CD4-positive, alpha-beta memory T cell (primary cell): ENCODE measurements at regions of chr14 and their contacts with region 1.

Region 1: GRCh38 chr14:22929104-22929847 is at the start of gene PRMT5:
- DNase-seq: peak; percentile 98 to 100 (median 99)
- H3K4me3 ChIP-seq: peak within 1 kb of the TSS; percentile 83 to 99
- H3K4me3 Mint-ChIP-seq: no peak within 1 kb of the TSS
- H3K27ac ChIP-seq: peak within 1 kb of the TSS; percentile 91
- H3K27ac Mint-ChIP-seq: peak within 1 kb of the TSS in 1 of 7 donors; percentile 75
- H3K4me1 ChIP-seq: peaks cover 17% of the 10 kb centered on the region
- H3K4me1 Mint-ChIP-seq: peaks cover 9 to 14% (median 12%) of the 10 kb centered on the region in 4 donors
- H3K27me3 ChIP-seq: no peaks in the 10 kb centered on the region
- H3K27me3 Mint-ChIP-seq: no peaks in the 10 kb centered on the region
- total RNA-seq, gene PRMT5: 25.8 to 30.5 TPM

Region 2: GRCh38 chr14:22589096-22589839 is 340.0 kb before region 1 on chr14 and contains the start of gene DAD1:
- CTCF ChIA-PET with region 1: interaction called, 4 read pairs
- POLR2A ChIA-PET with region 1: interaction called, 13 read pairs
- intact Hi-C with region 1: loop called (anchors 1 kb)
- DNase-seq: peak; percentile 100
- H3K4me3 ChIP-seq: peak within 1 kb of the TSS; percentile 85 to 87
- H3K4me3 Mint-ChIP-seq: peak within 1 kb of the TSS; percentile 92 to 100 (median 97)
- H3K27ac ChIP-seq: peak within 1 kb of the TSS; percentile 88
- H3K27ac Mint-ChIP-seq: peak within 1 kb of the TSS; percentile 99 to 100 (median 99)
- H3K4me1 ChIP-seq: peaks cover 50% of the 10 kb centered on the region
- H3K4me1 Mint-ChIP-seq: peaks cover 39 to 63% (median 51%) of the 10 kb centered on the region in 4 donors
- H3K27me3 ChIP-seq: no peaks in the 10 kb centered on the region
- H3K27me3 Mint-ChIP-seq: peaks cover 2% of the 10 kb centered on the region in 2 donors
- total RNA-seq, gene DAD1: 110 to 124 TPM

Region 3: GRCh38 chr14:22872033-22872832 is 57.0 kb before region 1 on chr14:
- CTCF ChIA-PET with region 1: interaction called, 24 read pairs
- POLR2A ChIA-PET with region 1: interaction called, 16 read pairs
- intact Hi-C with region 1: loop called (anchors 1 kb)
- DNase-seq: peak; percentile 66 to 78 (median 73)
- H3K4me3 ChIP-seq: peak overlapping the region; percentile 24 to 55
- H3K4me3 Mint-ChIP-seq: peak overlapping the region; percentile 88 to 98 (median 97)
- H3K27ac ChIP-seq: peak overlapping the region; percentile 79
- H3K27ac Mint-ChIP-seq: peak overlapping the region; percentile 72 to 100 (median 89)
- H3K4me1 ChIP-seq: peaks cover 48% of the 10 kb centered on the region
- H3K4me1 Mint-ChIP-seq: peaks cover 17 to 46% (median 33%) of the 10 kb centered on the region in 4 donors
- H3K27me3 ChIP-seq: no peaks in the 10 kb centered on the region
- H3K27me3 Mint-ChIP-seq: no peaks in the 10 kb centered on the region

Region 4: DNA sequence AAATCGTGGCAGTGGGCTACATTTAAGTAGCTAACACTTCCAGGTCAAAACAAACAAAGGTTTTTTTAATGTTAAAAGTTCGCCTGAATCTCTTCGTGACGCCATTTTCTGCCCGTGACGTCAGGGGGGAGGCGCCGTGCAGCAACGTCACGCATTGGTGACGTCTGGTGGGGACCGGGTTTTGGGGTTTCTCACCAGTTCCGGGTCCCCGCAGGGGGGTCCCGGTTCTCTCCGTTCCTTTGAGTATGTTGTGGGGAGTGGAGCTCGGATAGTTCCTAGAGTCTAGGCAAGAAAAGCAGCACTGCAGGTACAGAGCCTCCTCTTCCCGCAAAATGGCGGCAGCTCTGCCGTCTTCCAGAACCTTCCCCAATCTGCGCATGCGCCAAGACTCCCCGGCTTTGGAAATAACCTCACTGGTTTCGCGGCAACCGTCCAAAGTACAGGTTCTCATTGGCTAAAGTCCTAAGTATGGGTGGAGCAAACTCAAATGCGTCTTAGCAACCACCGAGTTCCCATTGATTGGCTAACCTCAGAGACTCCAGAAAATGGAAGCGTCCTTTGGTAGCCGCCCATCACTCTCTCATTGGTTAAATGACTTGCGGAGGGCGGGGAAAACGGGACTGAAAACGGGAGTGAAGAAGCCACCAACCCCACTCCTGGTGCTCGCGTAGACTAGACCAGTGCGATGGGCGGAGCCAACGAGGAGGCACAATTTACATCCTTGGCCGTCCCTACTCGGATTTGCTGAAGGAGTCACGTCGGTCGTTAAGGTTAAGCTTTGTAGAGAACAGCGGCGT is 10.3 kb before region 1 on chr14 and contains the start of gene RBM23:
- CTCF ChIA-PET with region 1: interaction called, 72 read pairs
- POLR2A ChIA-PET with region 1: interaction called, 120 read pairs
- intact Hi-C with region 1: loop called (anchors 1 kb)
- DNase-seq: peak; percentile 99 to 100 (median 100)
- H3K4me3 ChIP-seq: peak within 1 kb of the TSS; percentile 67 to 93
- H3K4me3 Mint-ChIP-seq: peak within 1 kb of the TSS; percentile 94 to 99 (median 96)
- H3K27ac ChIP-seq: peak within 1 kb of the TSS; percentile 98
- H3K27ac Mint-ChIP-seq: peak within 1 kb of the TSS; percentile 99 to 100 (median 100)
- H3K4me1 ChIP-seq: peaks cover 40% of the 10 kb centered on the region
- H3K4me1 Mint-ChIP-seq: peaks cover 13 to 56% (median 33%) of the 10 kb centered on the region in 4 donors
- H3K27me3 ChIP-seq: no peaks in the 10 kb centered on the region
- H3K27me3 Mint-ChIP-seq: peaks cover 0 to 4% of the 10 kb centered on the region in 2 donors
- total RNA-seq, gene RBM23: 119 to 123 TPM

Region 5: DNA sequence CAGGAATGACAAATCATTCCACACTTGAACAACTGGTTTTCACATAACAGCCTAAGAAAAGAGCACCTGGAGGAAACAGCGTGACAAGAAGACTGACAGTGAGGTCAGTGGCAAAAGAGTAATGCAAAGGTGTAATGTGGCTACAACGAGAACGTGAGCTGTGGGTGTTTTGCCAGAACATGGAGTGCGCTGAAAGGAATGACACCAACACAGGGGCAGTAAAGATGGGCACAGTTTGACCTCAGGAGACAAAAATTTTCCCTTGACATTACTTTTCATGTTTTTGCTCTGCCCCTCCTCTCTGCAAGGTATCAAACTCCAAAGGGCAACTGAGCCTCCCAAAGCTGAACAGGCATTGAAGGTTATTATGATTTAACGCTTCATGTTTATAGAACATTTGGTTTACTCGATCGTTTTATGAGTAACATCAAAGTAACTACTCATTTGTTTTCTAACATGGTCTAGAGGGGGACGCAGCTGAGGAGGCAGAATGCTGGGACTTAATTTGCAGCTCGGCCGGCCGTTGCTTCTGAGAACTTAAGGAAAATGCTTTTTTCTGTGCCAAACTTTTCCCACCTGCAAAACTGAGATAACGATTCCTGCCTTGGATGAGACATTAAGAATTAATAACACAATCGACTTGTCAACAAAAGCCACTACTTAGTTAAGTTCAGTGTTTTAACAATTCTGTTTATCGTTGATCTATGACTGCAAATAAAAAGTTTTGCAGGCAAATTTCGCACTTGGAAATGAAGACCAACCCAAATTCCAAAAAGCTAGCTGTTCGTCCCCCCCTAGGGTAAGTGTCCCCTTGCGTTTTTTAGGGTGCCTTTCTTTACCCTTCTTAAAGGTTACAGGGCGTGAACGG is 26.7 kb after region 1 on chr14:
- CTCF ChIA-PET with region 1: interaction called, 28 read pairs
- POLR2A ChIA-PET with region 1: interaction called, 36 read pairs
- intact Hi-C with region 1: loop called (anchors 1 kb)
- DNase-seq: peak in 1 of 5 donors; percentile 11
- H3K4me3 ChIP-seq: peak overlapping the region; percentile 30 to 89
- H3K4me3 Mint-ChIP-seq: peak overlapping the region; percentile 91 to 94 (median 92)
- H3K27ac ChIP-seq: peak overlapping the region; percentile 79
- H3K27ac Mint-ChIP-seq: peak overlapping the region; percentile 92 to 95 (median 93)
- H3K4me1 ChIP-seq: peaks cover 16% of the 10 kb centered on the region
- H3K4me1 Mint-ChIP-seq: peaks cover 13 to 22% (median 16%) of the 10 kb centered on the region in 4 donors
- H3K27me3 ChIP-seq: no peaks in the 10 kb centered on the region
- H3K27me3 Mint-ChIP-seq: no peaks in the 10 kb centered on the region

Region 6: DNA sequence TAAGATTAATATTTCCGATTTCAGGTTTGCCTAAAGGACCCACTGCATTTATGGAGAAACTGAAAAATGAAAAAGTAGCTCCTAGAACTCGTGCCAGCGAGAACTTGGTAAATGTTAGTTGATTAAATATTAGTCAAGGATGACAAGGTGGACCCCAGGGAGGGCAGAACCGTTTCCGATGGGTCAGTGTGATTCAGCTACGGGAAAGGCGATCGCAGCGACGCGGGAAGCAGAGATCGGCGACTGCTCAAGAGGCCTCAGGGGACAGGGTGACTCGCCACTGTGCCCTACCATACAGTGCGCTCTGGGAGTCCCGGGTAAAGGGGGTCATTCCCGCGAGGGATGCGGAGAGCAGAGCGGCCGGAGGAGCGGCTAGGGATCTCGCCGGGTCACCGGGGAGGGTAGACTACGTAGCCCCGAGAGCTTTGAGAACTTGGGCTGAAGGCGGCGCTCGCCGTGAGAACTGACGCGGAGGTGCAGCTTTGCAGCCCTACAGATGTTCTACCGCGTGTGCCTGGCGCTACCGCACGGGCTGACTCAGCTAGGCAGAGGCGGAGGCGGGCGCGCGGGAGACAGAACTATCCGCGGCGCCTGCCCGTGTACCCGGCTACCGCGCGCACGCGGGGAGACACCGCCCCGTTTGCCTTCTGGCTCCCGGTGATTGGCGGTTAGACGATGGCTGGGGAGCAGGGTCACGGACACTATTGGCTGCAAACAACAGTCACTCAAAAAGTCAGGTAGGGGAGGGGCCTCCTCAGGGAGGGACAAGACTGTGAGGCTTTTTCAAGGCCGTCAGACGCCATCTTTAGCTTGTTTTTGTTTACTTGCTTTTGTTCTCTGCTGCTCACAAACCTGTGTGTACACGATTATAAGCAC is 77.5 kb after region 1 on chr14:
- CTCF ChIA-PET with region 1: interaction called, 20 read pairs
- POLR2A ChIA-PET with region 1: interaction called, 21 read pairs
- intact Hi-C with region 1: loop called (anchors 1 kb)
- DNase-seq: peak; percentile 99
- H3K4me3 ChIP-seq: peak overlapping the region; percentile 96
- H3K4me3 Mint-ChIP-seq: peak overlapping the region; percentile 94 to 99 (median 97)
- H3K27ac ChIP-seq: peak overlapping the region; percentile 80
- H3K27ac Mint-ChIP-seq: peak overlapping the region; percentile 90 to 99 (median 97)
- H3K4me1 ChIP-seq: peaks cover 37% of the 10 kb centered on the region
- H3K4me1 Mint-ChIP-seq: peaks cover 17 to 52% (median 34%) of the 10 kb centered on the region in 4 donors
- H3K27me3 ChIP-seq: no peaks in the 10 kb centered on the region
- H3K27me3 Mint-ChIP-seq: no peaks in the 10 kb centered on the region